IMR-90 (cell line): ENCODE measurements at regions of chr9 and their contacts with region 1.

Region 1: DNA sequence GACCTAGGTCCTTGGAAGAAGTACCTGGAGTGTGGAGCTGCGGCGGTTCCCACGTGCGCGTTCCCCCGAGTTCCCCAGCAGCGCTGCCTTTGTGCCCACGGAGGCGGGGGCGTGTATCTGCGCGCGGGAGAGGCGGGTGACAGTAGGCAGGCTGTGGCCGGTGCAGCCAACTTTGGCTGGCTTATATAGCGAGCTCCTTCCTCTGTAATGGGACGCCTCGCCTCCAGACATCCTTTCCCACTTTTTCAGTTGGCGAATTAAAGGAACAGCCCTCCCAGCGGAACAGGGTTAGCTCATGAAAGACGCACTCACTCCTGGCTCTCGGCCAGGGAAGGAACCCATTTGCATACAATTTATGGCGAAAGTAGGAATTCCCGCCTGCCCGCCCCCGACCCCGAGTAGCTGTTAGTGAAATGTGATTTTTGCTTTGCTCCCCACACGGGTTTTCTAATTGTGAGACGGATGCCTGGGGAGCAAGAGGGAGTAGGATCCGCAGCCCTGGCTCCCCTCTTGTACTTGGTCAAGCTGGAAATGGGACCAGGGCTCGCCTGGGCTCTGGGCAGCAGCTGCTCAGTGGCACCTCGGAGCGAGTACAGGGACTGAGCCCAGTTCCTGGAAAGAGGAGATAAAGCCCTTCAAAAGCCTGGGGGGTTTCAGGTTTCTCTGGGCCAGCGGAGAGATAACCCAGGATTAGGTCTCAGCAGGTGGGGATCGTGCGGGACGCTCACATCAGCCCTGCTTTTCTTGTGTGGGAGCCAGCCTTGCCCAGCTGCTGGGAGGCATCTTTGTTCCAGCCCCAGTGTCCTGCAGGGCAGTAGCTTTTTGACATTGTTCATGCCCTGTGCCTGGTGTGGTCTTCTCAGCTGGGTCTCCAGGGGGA is at the start of gene TNC:
- DNase-seq: peak; percentile 92
- ATAC-seq: peak; percentile 63
- H3K4me3 ChIP-seq: peak within 1 kb of the TSS; percentile 84
- H3K27ac ChIP-seq: peak within 1 kb of the TSS; percentile 91
- H3K4me1 ChIP-seq: peaks cover 14% of the 10 kb centered on the region
- H3K27me3 ChIP-seq: no peaks in the 10 kb centered on the region; the same call in 1 of the 2 replicates
- CTCF ChIP-seq: no peak
- POLR2A ChIP-seq: peak; percentile 96
- RAD21 ChIP-seq: no peak
- total RNA-seq, gene TNC: 170 and 192 TPM in 2 replicates

Region 2: GRCh38 chr9:114196979-114197622 is 921.1 kb before region 1 on chr9:
- CTCF ChIA-PET with region 1: no interaction called
- POLR2A ChIA-PET with region 1: no interaction called
- dilution Hi-C with region 1: no loop called
- in situ Hi-C with region 1: no loop called
- intact Hi-C with region 1: no loop called
- DNase-seq: peak; percentile 32
- ATAC-seq: no peak
- H3K4me3 ChIP-seq: no peak overlapping the region
- H3K27ac ChIP-seq: no peak overlapping the region
- H3K4me1 ChIP-seq: peaks cover 9% of the 10 kb centered on the region
- H3K27me3 ChIP-seq: no peaks in the 10 kb centered on the region
- CTCF ChIP-seq: no peak
- POLR2A ChIP-seq: no peak
- RAD21 ChIP-seq: no peak

Region 3: DNA sequence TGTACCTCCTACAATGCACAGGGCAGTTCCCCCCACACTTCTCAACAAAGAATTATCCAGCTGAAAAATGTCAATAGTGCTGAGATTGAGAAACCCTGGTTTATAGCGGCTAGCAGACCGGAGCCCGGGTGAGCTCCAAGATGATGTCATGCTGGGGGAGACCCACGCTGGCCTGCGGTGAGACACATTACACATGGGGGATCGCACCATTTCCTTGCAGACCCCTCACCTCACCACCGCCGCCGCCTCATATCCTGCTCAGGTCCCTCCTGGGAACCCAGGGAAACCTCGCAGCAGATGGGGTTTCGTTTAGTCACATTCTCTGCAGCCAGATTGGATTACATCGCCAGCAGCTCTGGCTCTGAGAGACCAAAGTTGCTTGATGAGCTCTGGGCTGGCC is 14.4 kb after region 1 on chr9:
- CTCF ChIA-PET with region 1: no interaction called
- POLR2A ChIA-PET with region 1: interaction called, 8 read pairs
- dilution Hi-C with region 1: no loop called
- in situ Hi-C with region 1: no loop called
- intact Hi-C with region 1: loop called (anchors 1 kb)
- DNase-seq: peak; percentile 89
- ATAC-seq: peak; percentile 66
- H3K4me3 ChIP-seq: peak overlapping the region; percentile 2; the same call in 1 of the 2 replicates
- H3K27ac ChIP-seq: peak overlapping the region; percentile 74
- H3K4me1 ChIP-seq: peaks cover 18% of the 10 kb centered on the region
- H3K27me3 ChIP-seq: no peaks in the 10 kb centered on the region
- CTCF ChIP-seq: no peak
- POLR2A ChIP-seq: no peak
- RAD21 ChIP-seq: 0 out of 2 replicates have a peak, but pooled peaks have one; percentile 6

Region 4: GRCh38 chr9:115157245-115157674 is 39.0 kb after region 1 on chr9:
- CTCF ChIA-PET with region 1: no interaction called
- POLR2A ChIA-PET with region 1: no interaction called
- dilution Hi-C with region 1: no loop called
- in situ Hi-C with region 1: no loop called
- intact Hi-C with region 1: loop called (anchors 1 kb)
- DNase-seq: peak; percentile 88
- ATAC-seq: peak; percentile 85
- H3K4me3 ChIP-seq: no peak overlapping the region
- H3K27ac ChIP-seq: peak overlapping the region; percentile 46
- H3K4me1 ChIP-seq: peaks cover 9% of the 10 kb centered on the region
- H3K27me3 ChIP-seq: no peaks in the 10 kb centered on the region
- CTCF ChIP-seq: no peak
- POLR2A ChIP-seq: no peak
- RAD21 ChIP-seq: no peak

Region 5: GRCh38 chr9:115204904-115205453 is 86.7 kb after region 1 on chr9:
- CTCF ChIA-PET with region 1: no interaction called
- POLR2A ChIA-PET with region 1: interaction called, 3 read pairs
- dilution Hi-C with region 1: no loop called
- in situ Hi-C with region 1: no loop called
- intact Hi-C with region 1: loop called (anchors 2 kb)
- DNase-seq: peak; percentile 95
- ATAC-seq: peak; percentile 64
- H3K4me3 ChIP-seq: no peak overlapping the region
- H3K27ac ChIP-seq: peak overlapping the region; percentile 88
- H3K4me1 ChIP-seq: peaks cover 28% of the 10 kb centered on the region
- H3K27me3 ChIP-seq: no peaks in the 10 kb centered on the region
- CTCF ChIP-seq: no peak
- POLR2A ChIP-seq: no peak
- RAD21 ChIP-seq: no peak

Region 6: GRCh38 chr9:115262477-115262876 is 144.2 kb after region 1 on chr9:
- CTCF ChIA-PET with region 1: no interaction called
- POLR2A ChIA-PET with region 1: no interaction called
- dilution Hi-C with region 1: no loop called
- in situ Hi-C with region 1: no loop called
- intact Hi-C with region 1: loop called (anchors 2 kb)
- DNase-seq: peak; percentile 75
- ATAC-seq: peak; percentile 19
- H3K4me3 ChIP-seq: no peak overlapping the region
- H3K27ac ChIP-seq: peak overlapping the region; percentile 93
- H3K4me1 ChIP-seq: peaks cover 14% of the 10 kb centered on the region
- H3K27me3 ChIP-seq: no peaks in the 10 kb centered on the region
- CTCF ChIP-seq: no peak
- POLR2A ChIP-seq: no peak
- RAD21 ChIP-seq: no peak

Region 7: DNA sequence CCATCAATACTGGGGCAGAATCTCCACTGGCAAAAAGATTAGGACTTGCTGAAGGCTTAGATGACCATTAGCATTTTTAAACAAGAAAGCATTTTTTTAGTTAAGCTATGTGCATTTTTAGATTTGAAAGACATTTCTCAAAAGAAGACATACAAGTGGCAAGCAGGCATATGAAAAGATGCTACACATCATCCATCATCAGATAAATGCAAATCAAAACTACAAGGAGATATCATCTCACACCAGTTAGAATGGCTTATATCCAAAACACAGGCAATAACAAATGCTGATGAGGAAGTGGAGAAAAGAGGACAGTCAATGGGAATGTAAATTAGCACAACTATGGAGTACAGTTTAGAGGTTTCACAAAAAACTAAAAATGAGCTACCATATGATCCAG is 195.3 kb after region 1 on chr9:
- CTCF ChIA-PET with region 1: no interaction called
- POLR2A ChIA-PET with region 1: no interaction called
- dilution Hi-C with region 1: no loop called
- in situ Hi-C with region 1: no loop called
- intact Hi-C with region 1: no loop called
- DNase-seq: no peak
- ATAC-seq: no peak
- H3K4me3 ChIP-seq: no peak overlapping the region
- H3K27ac ChIP-seq: no peak overlapping the region
- H3K4me1 ChIP-seq: no peaks in the 10 kb centered on the region
- H3K27me3 ChIP-seq: no peaks in the 10 kb centered on the region
- CTCF ChIP-seq: no peak
- POLR2A ChIP-seq: no peak
- RAD21 ChIP-seq: no peak

Region 8: GRCh38 chr9:115373000-115373709 is 254.9 kb after region 1 on chr9:
- CTCF ChIA-PET with region 1: no interaction called
- POLR2A ChIA-PET with region 1: no interaction called
- dilution Hi-C with region 1: no loop called
- in situ Hi-C with region 1: no loop called
- intact Hi-C with region 1: loop called (anchors 5 kb)
- DNase-seq: peak; percentile 98
- ATAC-seq: peak; percentile 81
- H3K4me3 ChIP-seq: no peak overlapping the region
- H3K27ac ChIP-seq: peak overlapping the region; percentile 86
- H3K4me1 ChIP-seq: peaks cover 10% of the 10 kb centered on the region
- H3K27me3 ChIP-seq: no peaks in the 10 kb centered on the region
- CTCF ChIP-seq: no peak
- POLR2A ChIP-seq: no peak
- RAD21 ChIP-seq: no peak; the same call in 1 of the 2 replicates